ENCODE measurements at regions of chr22 and their contacts with region 1.

Region 1: GRCh38 chr22:45553351-45554039 is 50.8 kb downstream of the FBLN1 start:
- DNase-seq: peak; percentile 68 to 93
- H3K4me3 ChIP-seq: peak overlapping the region in 2 of 4 donors; percentile 2 to 8
- H3K27ac ChIP-seq: peak overlapping the region; percentile 62 to 86 (median 83)
- H3K4me1 ChIP-seq: peaks cover 45 to 61% (median 56%) of the 10 kb centered on the region in 4 donors
- H3K27me3 ChIP-seq: peaks cover 0 to 6% (median 0%) of the 10 kb centered on the region in 3 donors
- CTCF ChIP-seq: peak in 5 of 7 experiments; percentile 74 to 83 (median 76)
- EP300 ChIP-seq: peak; percentile 6
- POLR2A ChIP-seq: no peak

Region 2: DNA sequence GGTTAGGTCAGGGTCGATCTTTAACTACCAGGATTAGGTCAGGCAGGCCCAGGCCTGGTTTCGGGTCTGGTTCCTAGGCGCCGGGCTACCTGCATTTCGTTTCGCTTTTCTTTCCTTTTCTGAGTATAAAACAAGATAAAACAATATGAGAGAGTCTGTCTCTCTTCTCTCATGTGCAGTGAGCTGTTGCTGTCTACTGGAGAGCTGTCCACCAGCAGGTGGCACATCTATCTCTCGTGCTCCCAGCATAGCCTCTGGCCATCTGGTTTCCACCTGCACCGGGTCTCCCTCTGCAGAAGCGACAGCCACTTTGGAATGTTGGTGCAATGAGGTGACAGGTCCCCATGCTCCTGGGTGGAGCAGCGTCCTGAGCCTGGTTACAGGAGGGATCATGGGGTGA is 112.4 kb before region 1 on chr22:
- intact Hi-C with region 1: loop called (anchors 5 kb)
- DNase-seq: peak; percentile 35 to 86
- H3K4me3 ChIP-seq: no peak overlapping the region
- H3K27ac ChIP-seq: peak overlapping the region in 1 of 5 donors; percentile 19
- H3K4me1 ChIP-seq: peaks cover 0 to 8% (median 0%) of the 10 kb centered on the region in 4 donors
- H3K27me3 ChIP-seq: no peaks in the 10 kb centered on the region
- CTCF ChIP-seq: peak in 5 of 7 experiments; percentile 35 to 51 (median 48)
- EP300 ChIP-seq: no peak
- POLR2A ChIP-seq: no peak

Region 3: GRCh38 chr22:45478108-45478771 is 75.3 kb before region 1 on chr22:
- intact Hi-C with region 1: no loop called
- DNase-seq: peak in 1 of 2 donors; percentile 46
- H3K4me3 ChIP-seq: no peak overlapping the region
- H3K27ac ChIP-seq: no peak overlapping the region
- H3K4me1 ChIP-seq: no peaks in the 10 kb centered on the region
- H3K27me3 ChIP-seq: peaks cover 0 to 8% (median 0%) of the 10 kb centered on the region in 3 donors
- CTCF ChIP-seq: no peak
- EP300 ChIP-seq: no peak
- POLR2A ChIP-seq: no peak